ENCODE measurements at regions of chr21 and their contacts with region 1.

Region 1: DNA sequence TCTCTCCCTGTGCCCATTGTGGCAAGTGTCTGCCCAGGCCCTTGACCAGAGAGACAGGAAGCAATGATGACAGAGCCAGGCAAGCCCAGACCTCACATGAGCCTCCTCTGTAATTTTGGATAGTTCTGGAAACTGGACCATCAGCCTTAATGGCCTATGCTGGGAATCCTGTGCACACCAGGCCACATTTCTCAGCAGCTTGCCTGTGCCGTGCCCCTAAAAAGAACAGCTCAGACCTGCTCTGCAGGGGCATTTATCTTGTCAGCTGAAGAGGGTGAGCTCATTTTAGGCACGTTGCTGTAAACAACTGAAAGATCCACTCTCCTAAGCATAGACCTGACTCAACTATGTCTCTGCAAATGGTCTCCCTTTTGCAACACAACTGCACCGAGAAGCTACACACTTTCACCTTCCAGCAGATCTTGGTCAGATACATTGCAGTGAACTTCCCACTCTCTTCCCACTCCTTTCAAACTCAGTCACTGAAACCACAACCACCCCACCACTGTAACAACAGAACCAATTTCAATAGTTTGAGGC is 53.5 kb upstream of the BACH1 start:
- DNase-seq: no peak
- H3K4me3 ChIP-seq: no peak overlapping the region
- H3K27ac ChIP-seq: peak overlapping the region in 26 of 59 donors; percentile 7 to 69 (median 36)
- H3K27me3 ChIP-seq: no peaks in the 10 kb centered on the region
- CTCF ChIP-seq: no peak

Region 2: DNA sequence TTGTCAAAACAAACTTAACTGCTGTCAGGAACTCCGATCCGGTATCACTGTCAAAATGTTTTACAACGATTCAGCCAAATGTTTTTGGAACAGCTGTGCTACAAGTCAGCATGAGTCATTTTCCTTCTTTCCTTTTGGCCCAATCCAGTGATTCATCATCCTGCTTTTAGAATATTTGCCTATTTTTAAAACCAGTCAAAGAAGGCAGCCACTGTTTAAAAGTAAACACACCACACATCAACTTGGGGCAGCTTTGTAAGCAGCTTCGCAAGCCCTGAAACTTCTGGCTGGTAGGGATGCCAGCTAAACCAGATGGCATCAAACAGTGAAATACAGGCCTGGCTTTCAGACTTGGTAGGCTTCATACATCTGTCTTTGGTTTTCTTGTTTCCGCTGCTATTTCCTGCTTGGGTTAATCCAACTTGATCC is 99.8 kb before region 1 on chr21:
- intact Hi-C with region 1: no loop called
- DNase-seq: peak in 6 of 10 donors; percentile 30 to 61 (median 48)
- H3K4me3 ChIP-seq: no peak overlapping the region
- H3K27ac ChIP-seq: peak overlapping the region in 18 of 59 donors; percentile 4 to 78 (median 34)
- H3K27me3 ChIP-seq: no peaks in the 10 kb centered on the region
- CTCF ChIP-seq: no peak

Region 3: GRCh38 chr21:29195981-29196669 is 49.0 kb before region 1 on chr21:
- intact Hi-C with region 1: loop called in 1 of 2 experiments (anchors 10 kb)
- DNase-seq: peak in 1 of 10 donors; percentile 30
- H3K4me3 ChIP-seq: peak overlapping the region in 20 of 59 donors; percentile 0 to 35 (median 18)
- H3K27ac ChIP-seq: peak overlapping the region in 19 of 59 donors; percentile 1 to 58 (median 25)
- H3K27me3 ChIP-seq: no peaks in the 10 kb centered on the region
- CTCF ChIP-seq: peak in 6 of 56 donors; percentile 10 to 24 (median 16)

Region 4: DNA sequence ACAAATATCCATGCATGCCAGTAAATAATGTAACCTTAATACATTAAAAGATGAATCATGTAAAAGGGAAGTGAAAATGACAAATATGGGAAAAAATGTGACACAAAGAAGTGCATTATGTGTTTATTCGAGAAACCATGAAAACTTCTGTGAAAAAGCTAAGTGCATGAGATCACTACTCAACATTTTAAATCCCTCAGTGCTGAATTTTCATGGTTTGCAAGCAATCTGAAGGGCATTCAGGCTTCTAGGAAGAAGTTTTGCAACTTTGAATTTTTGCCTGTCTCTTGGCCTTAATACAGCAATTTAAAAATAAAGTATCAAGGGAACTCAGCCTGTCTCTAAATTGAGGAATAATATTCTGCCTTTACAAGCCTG is 36.5 kb before region 1 on chr21:
- intact Hi-C with region 1: no loop called
- DNase-seq: no peak
- H3K4me3 ChIP-seq: no peak overlapping the region
- H3K27ac ChIP-seq: no peak overlapping the region
- H3K27me3 ChIP-seq: peaks cover 0 to 8% (median 0%) of the 10 kb centered on the region in 45 donors
- CTCF ChIP-seq: no peak

Region 5: DNA sequence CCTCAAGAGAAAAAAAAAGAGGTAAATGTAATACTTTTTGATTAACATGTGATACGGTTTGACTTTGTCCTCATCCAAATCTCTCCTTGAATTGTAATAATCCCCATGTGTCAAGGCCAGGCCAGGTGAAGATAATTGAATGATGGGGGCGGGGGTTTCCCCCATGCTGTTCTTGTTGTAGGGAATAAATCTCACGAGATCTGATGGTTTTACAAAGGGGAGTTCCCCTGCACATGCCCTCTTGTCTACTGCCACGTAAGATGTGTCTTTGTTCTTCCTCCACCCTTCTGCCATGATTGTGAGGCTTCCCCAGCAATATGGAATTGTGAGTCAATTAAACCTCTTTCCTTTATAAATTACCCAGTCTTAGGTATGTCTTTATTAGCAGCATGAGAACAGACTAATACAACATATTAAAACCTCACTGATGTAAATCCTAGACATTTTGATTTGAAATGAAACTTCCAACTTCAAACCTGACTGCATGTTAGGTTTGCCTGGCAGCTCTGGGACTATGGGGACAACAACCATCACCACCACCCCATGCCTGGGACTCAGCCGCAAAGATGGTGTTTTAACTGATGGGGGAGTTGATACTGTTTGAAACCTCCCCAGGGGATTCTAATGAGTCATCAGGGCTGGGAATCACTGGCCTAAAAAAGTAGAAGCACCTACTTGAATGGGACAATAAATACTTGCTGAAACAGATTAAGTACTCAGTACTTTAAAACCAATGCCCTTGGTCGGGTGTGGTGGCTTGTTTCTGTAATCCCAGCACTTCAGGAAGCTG is 20.7 kb after region 1 on chr21:
- intact Hi-C with region 1: no loop called
- DNase-seq: no peak
- H3K4me3 ChIP-seq: no peak overlapping the region
- H3K27ac ChIP-seq: no peak overlapping the region
- H3K27me3 ChIP-seq: no peaks in the 10 kb centered on the region
- CTCF ChIP-seq: no peak

Region 6: DNA sequence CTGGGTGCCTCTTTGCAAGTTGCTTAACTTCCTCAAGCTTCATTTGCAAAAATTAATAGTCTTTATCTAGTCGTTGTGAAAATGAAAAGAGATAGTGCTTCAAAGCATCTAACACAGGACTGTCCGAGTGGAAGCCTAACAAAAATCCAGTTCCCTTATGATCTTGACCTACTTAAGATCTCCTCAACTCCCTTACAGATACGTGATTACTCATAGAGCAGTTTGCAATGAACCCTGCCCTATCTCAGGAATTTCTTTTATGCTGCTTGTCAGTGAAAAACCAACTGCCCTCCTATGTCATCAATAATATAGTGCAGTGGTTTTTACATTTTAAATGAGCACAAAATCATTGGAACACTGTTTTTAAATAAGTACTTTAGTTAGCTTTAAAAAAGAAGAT is 367.8 kb after region 1 on chr21:
- intact Hi-C with region 1: no loop called
- DNase-seq: no peak
- H3K4me3 ChIP-seq: no peak overlapping the region
- H3K27ac ChIP-seq: no peak overlapping the region
- H3K27me3 ChIP-seq: no peaks in the 10 kb centered on the region
- CTCF ChIP-seq: no peak

Measured in dorsolateral prefrontal cortex (tissue), 120 donors.